ENCODE measurements at regions of chr4 and their contacts with region 1.

Region 1: DNA sequence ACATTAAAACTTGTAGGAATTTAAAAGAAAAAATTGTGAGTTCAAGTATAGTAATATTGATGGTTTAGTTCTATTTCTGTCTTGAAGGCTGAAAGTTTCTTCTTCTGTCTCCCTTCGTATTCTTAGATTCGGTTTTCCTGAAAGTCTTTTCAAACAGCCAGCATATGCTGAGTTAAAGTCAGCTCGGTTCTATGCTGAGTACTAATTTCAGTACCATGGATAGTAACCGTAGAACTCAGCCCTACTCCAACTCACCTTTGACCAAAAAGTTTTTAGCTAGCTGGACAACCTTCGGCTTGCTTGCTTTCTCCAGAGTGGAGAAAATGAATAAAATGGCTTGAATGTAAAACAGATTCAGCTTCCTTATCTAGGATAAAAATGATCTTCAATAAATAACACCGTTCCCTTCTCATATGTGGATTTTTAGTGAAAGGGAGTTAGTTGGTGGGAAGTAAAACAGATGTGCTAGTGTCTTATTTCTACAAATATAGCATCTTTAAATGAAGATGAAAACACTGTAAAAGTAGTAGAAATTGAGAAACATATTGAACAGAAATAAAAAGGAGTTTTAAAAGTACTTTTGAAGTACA is 5.2 kb downstream of the POU4F2 start:
- DNase-seq: no peak
- H3K4me3 Mint-ChIP-seq: no peak overlapping the region
- H3K27ac Mint-ChIP-seq: no peak overlapping the region
- H3K4me1 Mint-ChIP-seq: peaks cover 7% of the 10 kb centered on the region
- H3K27me3 Mint-ChIP-seq: peaks cover 64% of the 10 kb centered on the region

Region 2: GRCh38 chr4:146342600-146343192 is 301.2 kb before region 1 on chr4:
- CTCF ChIA-PET with region 1: interaction called, 3 read pairs
- POLR2A ChIA-PET with region 1: no interaction called
- intact Hi-C with region 1: loop called (anchors 5 kb)
- DNase-seq: peak; percentile 27
- H3K4me3 Mint-ChIP-seq: no peak overlapping the region
- H3K27ac Mint-ChIP-seq: no peak overlapping the region
- H3K4me1 Mint-ChIP-seq: peaks cover 3% of the 10 kb centered on the region
- H3K27me3 Mint-ChIP-seq: no peaks in the 10 kb centered on the region